WTC11 (cell line): ENCODE measurements at regions of chr18 and their contacts with region 1.

Region 1: GRCh38 chr18:62066102-62066818 is 120.6 kb downstream of the PIGN start:
- DNase-seq: no peak
- ATAC-seq: no peak
- H3K4me3 Mint-ChIP-seq: no peak overlapping the region
- H3K27ac Mint-ChIP-seq: peak overlapping the region; percentile 6; the same call in 1 of the 2 replicates
- H3K4me1 Mint-ChIP-seq: no peaks in the 10 kb centered on the region
- H3K27me3 Mint-ChIP-seq: no peaks in the 10 kb centered on the region
- CTCF ChIP-seq: no peak

Region 2: GRCh38 chr18:61893971-61894750 is 172.1 kb before region 1 on chr18:
- CTCF ChIA-PET with region 1: no interaction called
- POLR2A ChIA-PET with region 1: interaction called, 10 read pairs
- DNase-seq: peak; percentile 82
- ATAC-seq: peak; percentile 70
- H3K4me3 Mint-ChIP-seq: peak overlapping the region; percentile 68
- H3K27ac Mint-ChIP-seq: no peak overlapping the region
- H3K4me1 Mint-ChIP-seq: peaks cover 23% of the 10 kb centered on the region
- H3K27me3 Mint-ChIP-seq: peaks cover 58% of the 10 kb centered on the region
- CTCF ChIP-seq: no peak

Region 3: DNA sequence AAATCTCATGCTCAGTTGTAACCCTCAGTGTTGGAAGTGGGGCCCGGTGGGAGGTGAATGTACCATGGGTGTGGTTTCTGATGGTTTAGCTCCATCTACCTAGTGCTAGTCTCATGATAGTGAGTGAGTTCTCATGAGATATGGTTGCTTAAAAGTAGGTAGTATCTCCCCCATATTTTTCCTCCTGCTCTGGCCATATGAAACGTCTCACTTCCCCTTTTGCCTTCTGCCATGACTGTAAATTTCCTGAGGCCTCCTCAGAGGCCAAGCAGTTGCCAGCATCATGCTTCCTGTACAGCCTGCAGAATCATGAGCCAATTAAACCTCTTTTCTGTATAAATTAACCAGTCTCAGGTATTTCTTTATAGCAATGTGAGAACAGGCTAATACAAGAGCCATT is 110.6 kb before region 1 on chr18:
- CTCF ChIA-PET with region 1: no interaction called
- POLR2A ChIA-PET with region 1: no interaction called
- DNase-seq: no peak
- ATAC-seq: no peak
- H3K4me3 Mint-ChIP-seq: no peak overlapping the region
- H3K27ac Mint-ChIP-seq: no peak overlapping the region
- H3K4me1 Mint-ChIP-seq: peaks cover 21% of the 10 kb centered on the region
- H3K27me3 Mint-ChIP-seq: no peaks in the 10 kb centered on the region; the same call in 1 of the 2 replicates
- CTCF ChIP-seq: no peak